Heart right ventricle (tissue), 16 donors: ENCODE measurements at regions of chr19 and their contacts with region 1.

Region 1: DNA sequence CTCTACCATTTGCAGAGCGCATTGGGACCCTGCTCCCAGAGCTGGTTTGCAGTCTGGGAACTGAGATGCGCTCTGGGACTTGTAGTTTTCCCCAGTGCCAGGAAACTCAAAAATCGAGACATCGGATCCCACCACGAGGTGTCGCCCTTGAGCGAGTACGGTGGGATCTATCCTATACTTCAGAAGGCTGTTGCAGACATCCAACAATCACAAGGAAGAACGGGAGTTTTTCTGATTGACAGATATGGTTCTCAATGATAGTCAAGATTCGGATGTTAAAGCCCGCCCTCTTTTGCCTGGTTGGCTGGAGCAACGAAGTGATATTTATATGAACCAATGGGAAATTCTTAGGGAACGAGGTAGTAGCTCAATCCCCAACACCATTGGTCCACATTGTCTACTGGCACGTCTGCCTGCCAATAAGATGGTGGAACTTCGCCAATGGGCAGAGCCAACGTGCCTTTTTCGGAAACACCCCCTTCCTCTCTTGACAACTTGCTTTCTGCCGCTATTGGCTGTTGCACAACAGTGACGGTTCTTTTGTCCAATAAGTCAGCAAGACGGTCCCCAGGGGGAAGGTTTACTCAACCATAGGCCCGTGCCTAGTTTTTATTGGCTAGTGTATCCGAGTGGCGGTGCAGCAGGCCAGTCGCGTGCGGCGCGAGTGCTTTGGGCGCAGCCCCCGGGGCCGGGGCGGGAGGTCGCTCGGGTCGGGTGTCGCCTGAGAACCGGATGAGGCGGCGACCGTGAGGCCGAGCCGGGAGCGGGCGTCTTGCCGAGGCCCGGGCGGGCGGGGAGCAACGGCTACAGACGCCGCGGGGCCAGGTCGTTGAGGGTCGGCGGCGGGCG is at the start of gene DNM2:
- DNase-seq: peak; percentile 98 to 100
- ATAC-seq: peak; percentile 91 to 95 (median 94)
- H3K4me3 ChIP-seq: peak within 1 kb of the TSS; percentile 61 to 100 (median 94)
- H3K27ac ChIP-seq: peak within 1 kb of the TSS; percentile 93 to 99 (median 98)
- H3K4me1 ChIP-seq: peaks cover 13 to 44% (median 37%) of the 10 kb centered on the region in 9 donors
- H3K27me3 ChIP-seq: no peaks in the 10 kb centered on the region
- CTCF ChIP-seq: peak; percentile 74 to 94 (median 88)
- total RNA-seq, gene DNM2: 118 to 206 (median 135) TPM

Region 2: DNA sequence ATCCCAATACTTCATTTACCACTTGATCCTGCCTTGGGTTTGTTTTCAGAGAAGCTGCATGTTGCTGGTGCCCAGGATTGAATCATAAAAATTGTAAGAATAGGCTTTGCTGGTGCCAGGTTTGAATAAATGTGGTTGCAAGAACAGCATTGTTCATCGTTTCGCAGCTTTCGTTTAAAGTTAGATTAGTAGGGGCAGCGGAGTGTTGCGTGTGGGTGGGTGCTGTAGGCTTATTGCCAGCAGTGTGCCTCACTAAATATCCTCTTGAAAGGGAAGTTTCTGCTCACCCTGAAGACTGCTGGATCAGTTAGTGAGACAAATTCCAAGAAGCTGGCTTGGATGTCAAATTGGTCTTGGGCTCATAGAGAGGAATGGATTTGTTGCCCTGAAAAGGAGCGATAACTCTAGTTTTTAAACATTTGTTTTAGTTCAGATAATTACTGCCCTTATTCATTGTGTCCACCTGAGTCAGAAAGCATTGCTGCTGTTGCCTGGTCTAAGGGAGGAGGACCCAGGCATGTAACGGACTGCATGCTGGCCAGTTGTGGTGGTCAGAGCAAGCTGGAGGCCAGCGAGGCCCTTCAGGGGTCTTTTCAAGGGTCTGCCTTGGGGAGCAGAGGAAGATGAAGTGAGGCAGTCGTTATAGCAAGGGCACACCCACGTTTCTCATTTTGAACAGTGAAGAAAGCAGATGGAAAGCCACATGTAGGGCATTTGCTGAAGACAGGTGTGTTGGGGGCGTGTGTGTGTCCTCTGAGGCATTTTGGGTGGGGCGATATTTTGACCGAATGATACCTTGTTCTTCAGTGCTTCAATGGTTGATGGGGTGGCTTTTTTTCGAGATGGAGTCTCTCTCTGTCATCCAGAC is 55.0 kb before region 1 on chr19:
- intact Hi-C with region 1: no loop called
- DNase-seq: no peak
- ATAC-seq: no peak
- H3K4me3 ChIP-seq: no peak overlapping the region
- H3K27ac ChIP-seq: no peak overlapping the region
- H3K4me1 ChIP-seq: peaks cover 8 to 77% (median 60%) of the 10 kb centered on the region in 9 donors
- H3K27me3 ChIP-seq: no peaks in the 10 kb centered on the region
- CTCF ChIP-seq: no peak

Region 3: GRCh38 chr19:10751109-10751953 is 33.8 kb after region 1 on chr19:
- intact Hi-C with region 1: loop called in 2 of 10 experiments (anchors 5 kb)
- DNase-seq: no peak
- ATAC-seq: peak; percentile 45 to 80 (median 65)
- H3K4me3 ChIP-seq: peak overlapping the region in 3 of 10 donors; percentile 4 to 17 (median 16)
- H3K27ac ChIP-seq: peak overlapping the region; percentile 81 to 95 (median 86)
- H3K4me1 ChIP-seq: peaks cover 31 to 95% (median 75%) of the 10 kb centered on the region in 9 donors
- H3K27me3 ChIP-seq: no peaks in the 10 kb centered on the region
- CTCF ChIP-seq: no peak

Region 4: DNA sequence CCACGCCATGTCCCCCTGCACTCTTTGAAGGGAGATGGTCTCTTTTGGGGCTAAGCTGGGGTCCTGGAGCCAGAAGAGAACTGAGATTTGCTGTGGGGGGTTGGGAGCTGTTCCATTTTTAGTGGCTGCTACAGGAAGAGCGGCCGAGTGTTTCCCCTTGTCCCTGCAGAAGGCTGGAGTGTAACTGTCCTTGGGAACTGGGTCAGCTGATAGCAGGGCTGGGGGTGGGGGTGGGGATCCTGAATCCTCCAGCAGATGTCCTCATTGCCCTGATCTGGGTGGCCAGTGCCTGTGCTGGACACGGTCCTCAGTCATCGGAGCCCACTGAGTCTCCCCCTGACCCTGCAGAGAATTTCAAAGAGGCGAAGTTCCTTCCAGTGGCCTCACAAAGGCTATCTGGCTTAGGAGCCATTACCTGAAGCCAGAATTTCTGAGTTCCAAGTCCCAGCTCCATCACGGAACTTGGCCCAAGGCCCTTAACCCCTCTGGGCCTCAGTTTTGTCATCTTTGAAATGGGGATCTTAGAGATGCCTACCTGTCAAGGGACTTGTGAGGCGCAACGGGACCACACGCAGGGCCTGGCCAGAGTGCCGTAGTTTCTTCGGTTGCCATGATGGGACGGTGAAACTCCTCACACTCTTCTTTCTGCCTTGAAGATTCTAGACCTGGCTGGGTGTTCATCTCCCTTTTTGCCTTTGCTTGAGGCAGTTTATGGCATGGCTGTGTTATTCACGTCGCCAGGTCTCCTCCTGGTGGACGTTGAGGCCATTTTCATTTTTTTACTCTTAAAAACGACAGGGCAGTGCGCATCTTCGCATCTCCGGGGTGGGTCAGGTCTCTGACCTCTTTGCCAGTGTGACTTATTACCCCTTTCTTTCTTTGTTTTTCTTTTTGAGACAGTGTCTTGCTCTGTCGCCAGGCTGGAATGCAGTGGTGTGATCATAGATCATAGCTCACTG is 52.2 kb after region 1 on chr19:
- intact Hi-C with region 1: loop called (anchors 1 to 10 kb)
- DNase-seq: peak; percentile 66 to 85
- ATAC-seq: peak; percentile 80 to 89 (median 87)
- H3K4me3 ChIP-seq: peak overlapping the region in 7 of 10 donors; percentile 2 to 24 (median 14)
- H3K27ac ChIP-seq: peak overlapping the region; percentile 85 to 96 (median 92)
- H3K4me1 ChIP-seq: peaks cover 46 to 59% (median 56%) of the 10 kb centered on the region in 9 donors
- H3K27me3 ChIP-seq: no peaks in the 10 kb centered on the region
- CTCF ChIP-seq: peak in 7 of 9 donors; percentile 29 to 60 (median 45)

Region 5: GRCh38 chr19:10780368-10780767 is 62.8 kb after region 1 on chr19:
- intact Hi-C with region 1: loop called in 3 of 10 experiments (anchors 1 to 10 kb)
- DNase-seq: peak in 1 of 2 donors; percentile 72
- ATAC-seq: peak; percentile 41 to 90 (median 70)
- H3K4me3 ChIP-seq: no peak overlapping the region
- H3K27ac ChIP-seq: peak overlapping the region; percentile 27 to 95 (median 77)
- H3K4me1 ChIP-seq: peaks cover 0 to 85% (median 31%) of the 10 kb centered on the region in 9 donors
- H3K27me3 ChIP-seq: no peaks in the 10 kb centered on the region
- CTCF ChIP-seq: no peak

Region 6: GRCh38 chr19:10835754-10836477 is 118.3 kb after region 1 on chr19 and contains the start of gene TMED1:
- intact Hi-C with region 1: loop called in 2 of 10 experiments (anchors 1 to 2 kb)
- DNase-seq: peak; percentile 97 to 100
- ATAC-seq: peak; percentile 91 to 96 (median 94)
- H3K4me3 ChIP-seq: peak within 1 kb of the TSS; percentile 55 to 86 (median 72)
- H3K27ac ChIP-seq: peak within 1 kb of the TSS; percentile 94 to 99 (median 98)
- H3K4me1 ChIP-seq: peaks cover 0 to 16% (median 5%) of the 10 kb centered on the region in 9 donors
- H3K27me3 ChIP-seq: no peaks in the 10 kb centered on the region
- CTCF ChIP-seq: peak in 7 of 9 donors; percentile 16 to 58 (median 43)
- total RNA-seq, gene TMED1: 25.9 to 38.6 (median 32.9) TPM

Region 7: GRCh38 chr19:10864538-10864899 is 146.9 kb after region 1 on chr19:
- intact Hi-C with region 1: loop called (anchors 1 to 10 kb)
- DNase-seq: peak; percentile 86 to 89
- ATAC-seq: peak; percentile 66 to 92 (median 86)
- H3K4me3 ChIP-seq: peak overlapping the region in 1 of 10 donors; percentile 15
- H3K27ac ChIP-seq: peak overlapping the region in 3 of 10 donors; percentile 8 to 38 (median 18)
- H3K4me1 ChIP-seq: peaks cover 0 to 39% (median 6%) of the 10 kb centered on the region in 9 donors
- H3K27me3 ChIP-seq: no peaks in the 10 kb centered on the region
- CTCF ChIP-seq: peak; percentile 83 to 94 (median 91)

Region 8: DNA sequence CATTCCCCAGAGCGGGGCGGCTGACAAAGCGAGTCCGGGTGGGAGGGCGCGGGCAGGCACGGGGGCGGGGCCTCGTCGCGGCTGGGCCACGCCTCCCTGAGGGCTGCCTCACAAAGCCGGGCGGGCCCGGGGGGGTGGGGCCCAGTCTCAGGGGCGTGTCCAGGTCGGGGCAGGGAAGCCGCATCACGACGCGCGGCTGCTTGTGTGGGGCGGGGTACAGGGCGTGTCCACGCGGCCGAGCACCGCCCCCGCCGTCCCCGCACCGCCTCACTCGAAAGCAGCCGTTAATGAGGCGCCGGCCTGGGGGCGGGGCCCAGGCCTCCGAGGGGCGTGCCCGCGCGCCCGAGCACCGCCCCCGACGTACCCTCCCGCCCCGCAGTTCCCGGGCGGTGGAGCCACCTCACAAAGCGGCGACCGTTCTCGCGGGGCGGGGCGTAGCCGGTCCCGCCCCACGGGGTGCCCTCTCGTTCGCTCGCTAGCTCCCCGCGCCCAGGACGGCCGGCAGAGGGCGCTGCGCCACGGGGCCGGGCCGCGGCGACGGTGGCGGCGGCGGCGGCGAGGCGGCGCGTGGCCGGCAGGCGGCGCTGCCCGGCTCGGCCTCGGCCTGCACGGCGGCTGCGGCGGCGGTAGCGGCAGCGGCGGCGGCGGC is 153.5 kb after region 1 on chr19 and contains the start of gene CARM1:
- intact Hi-C with region 1: loop called in 2 of 10 experiments (anchors 5 to 10 kb)
- DNase-seq: peak; percentile 99 to 100
- ATAC-seq: peak; percentile 95 to 97 (median 96)
- H3K4me3 ChIP-seq: peak within 1 kb of the TSS; percentile 55 to 99 (median 70)
- H3K27ac ChIP-seq: peak within 1 kb of the TSS; percentile 64 to 90 (median 80)
- H3K4me1 ChIP-seq: peaks cover 5 to 55% (median 21%) of the 10 kb centered on the region in 9 donors
- H3K27me3 ChIP-seq: no peaks in the 10 kb centered on the region
- CTCF ChIP-seq: peak; percentile 40 to 88 (median 68)
- total RNA-seq, gene CARM1: 25.8 to 45.4 (median 28.8) TPM

Region 9: GRCh38 chr19:10960314-10961072 is 242.9 kb after region 1 on chr19 and contains the start of gene SMARCA4:
- intact Hi-C with region 1: no loop called
- DNase-seq: peak; percentile 96 to 99
- ATAC-seq: peak; percentile 95 to 98 (median 97)
- H3K4me3 ChIP-seq: peak within 1 kb of the TSS; percentile 72 to 99 (median 90)
- H3K27ac ChIP-seq: peak within 1 kb of the TSS; percentile 90 to 99 (median 95)
- H3K4me1 ChIP-seq: peaks cover 0 to 28% (median 17%) of the 10 kb centered on the region in 9 donors
- H3K27me3 ChIP-seq: no peaks in the 10 kb centered on the region
- CTCF ChIP-seq: no peak
- total RNA-seq, gene SMARCA4: 35.2 to 54.4 (median 42.2) TPM